ENCODE measurements at regions of chr18 and their contacts with region 1.

Region 1: GRCh38 chr18:62714671-62715435 is 488 bp upstream of the PHLPP1 start:
- DNase-seq: peak; percentile 95 to 97
- H3K4me3 ChIP-seq: peak overlapping the region; percentile 73
- H3K4me3 Mint-ChIP-seq: peak overlapping the region; percentile 74
- H3K27ac Mint-ChIP-seq: peak overlapping the region; percentile 72
- H3K4me1 ChIP-seq: 0 out of 2 replicates have a peak, but pooled peaks cover 3% of the 10 kb centered on the region
- H3K4me1 Mint-ChIP-seq: no peaks in the 10 kb centered on the region
- H3K27me3 ChIP-seq: no peaks in the 10 kb centered on the region
- H3K27me3 Mint-ChIP-seq: no peaks in the 10 kb centered on the region
- CTCF ChIP-seq: peak in 1 of 2 experiments; percentile 43

Region 2: DNA sequence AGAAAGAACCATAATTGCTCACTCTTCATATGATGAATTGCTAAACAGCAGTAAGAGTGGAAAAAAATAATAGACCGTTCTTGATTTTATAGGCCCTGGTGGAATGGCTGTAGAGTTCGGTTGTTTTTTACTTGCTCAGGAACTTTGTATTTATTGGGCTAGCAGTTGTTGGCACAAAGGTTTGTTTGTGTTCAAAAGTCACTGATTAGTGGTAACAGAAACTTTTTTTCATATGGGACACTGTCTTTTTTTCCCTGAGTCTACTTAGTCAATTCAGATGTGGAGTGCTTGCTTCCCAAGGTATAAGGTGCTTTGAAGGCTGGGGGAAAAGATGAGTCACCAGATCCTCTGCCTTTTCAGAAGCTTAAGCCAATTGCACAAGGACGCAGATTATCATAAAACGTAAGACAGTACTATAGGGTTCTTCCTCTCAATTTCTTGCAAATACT is 26.3 kb after region 1 on chr18:
- CTCF ChIA-PET with region 1: interaction called, 3 read pairs
- POLR2A ChIA-PET with region 1: no interaction called
- intact Hi-C with region 1: loop called (anchors 1 kb)
- DNase-seq: peak; percentile 55 to 65
- H3K4me3 ChIP-seq: peak overlapping the region; percentile 11; the same call in 1 of the 2 replicates
- H3K4me3 Mint-ChIP-seq: peak overlapping the region; percentile 65
- H3K27ac Mint-ChIP-seq: peak overlapping the region; percentile 72
- H3K4me1 ChIP-seq: peaks cover 28% of the 10 kb centered on the region
- H3K4me1 Mint-ChIP-seq: peaks cover 37% of the 10 kb centered on the region
- H3K27me3 ChIP-seq: no peaks in the 10 kb centered on the region
- H3K27me3 Mint-ChIP-seq: no peaks in the 10 kb centered on the region
- CTCF ChIP-seq: no peak

Region 3: GRCh38 chr18:62799977-62800376 is 85.1 kb after region 1 on chr18:
- CTCF ChIA-PET with region 1: interaction called, 6 read pairs
- POLR2A ChIA-PET with region 1: no interaction called
- intact Hi-C with region 1: loop called (anchors 1 kb)
- DNase-seq: no peak
- H3K4me3 ChIP-seq: no peak overlapping the region
- H3K4me3 Mint-ChIP-seq: no peak overlapping the region
- H3K27ac Mint-ChIP-seq: no peak overlapping the region
- H3K4me1 ChIP-seq: peaks cover 17% of the 10 kb centered on the region; the same call in 1 of the 2 replicates
- H3K4me1 Mint-ChIP-seq: peaks cover 31% of the 10 kb centered on the region
- H3K27me3 ChIP-seq: no peaks in the 10 kb centered on the region
- H3K27me3 Mint-ChIP-seq: no peaks in the 10 kb centered on the region
- CTCF ChIP-seq: no peak

Region 4: GRCh38 chr18:62957885-62958472 is 243.1 kb after region 1 on chr18:
- CTCF ChIA-PET with region 1: interaction called, 3 read pairs
- POLR2A ChIA-PET with region 1: no interaction called
- intact Hi-C with region 1: loop called (anchors 1 kb)
- DNase-seq: peak in 1 of 2 experiments; percentile 51
- H3K4me3 ChIP-seq: no peak overlapping the region
- H3K4me3 Mint-ChIP-seq: no peak overlapping the region
- H3K27ac Mint-ChIP-seq: no peak overlapping the region
- H3K4me1 ChIP-seq: no peaks in the 10 kb centered on the region
- H3K4me1 Mint-ChIP-seq: no peaks in the 10 kb centered on the region
- H3K27me3 ChIP-seq: no peaks in the 10 kb centered on the region
- H3K27me3 Mint-ChIP-seq: no peaks in the 10 kb centered on the region
- CTCF ChIP-seq: peak in 1 of 2 experiments; percentile 20